ENCODE measurements at regions of chr15 and their contacts with region 1.

Region 1: GRCh38 chr15:84716036-84716799 is at the start of gene SEC11A:
- DNase-seq: peak; percentile 80 to 93 (median 88)
- ATAC-seq: peak; percentile 96 to 97 (median 96)
- H3K4me3 ChIP-seq: peak within 1 kb of the TSS; percentile 65 to 95
- H3K4me3 Mint-ChIP-seq: peak within 1 kb of the TSS; percentile 88 to 97 (median 89)
- H3K27ac ChIP-seq: peak within 1 kb of the TSS; percentile 78
- H3K27ac Mint-ChIP-seq: peak within 1 kb of the TSS; percentile 97 to 98
- H3K4me1 ChIP-seq: peaks cover 25% of the 10 kb centered on the region in 2 experiments
- H3K4me1 Mint-ChIP-seq: peaks cover 47 to 63% (median 49%) of the 10 kb centered on the region in 3 donors
- H3K27me3 ChIP-seq: no peaks in the 10 kb centered on the region
- H3K27me3 Mint-ChIP-seq: no peaks in the 10 kb centered on the region
- total RNA-seq, gene SEC11A: 52.3 to 68.9 (median 66.5) TPM

Region 2: DNA sequence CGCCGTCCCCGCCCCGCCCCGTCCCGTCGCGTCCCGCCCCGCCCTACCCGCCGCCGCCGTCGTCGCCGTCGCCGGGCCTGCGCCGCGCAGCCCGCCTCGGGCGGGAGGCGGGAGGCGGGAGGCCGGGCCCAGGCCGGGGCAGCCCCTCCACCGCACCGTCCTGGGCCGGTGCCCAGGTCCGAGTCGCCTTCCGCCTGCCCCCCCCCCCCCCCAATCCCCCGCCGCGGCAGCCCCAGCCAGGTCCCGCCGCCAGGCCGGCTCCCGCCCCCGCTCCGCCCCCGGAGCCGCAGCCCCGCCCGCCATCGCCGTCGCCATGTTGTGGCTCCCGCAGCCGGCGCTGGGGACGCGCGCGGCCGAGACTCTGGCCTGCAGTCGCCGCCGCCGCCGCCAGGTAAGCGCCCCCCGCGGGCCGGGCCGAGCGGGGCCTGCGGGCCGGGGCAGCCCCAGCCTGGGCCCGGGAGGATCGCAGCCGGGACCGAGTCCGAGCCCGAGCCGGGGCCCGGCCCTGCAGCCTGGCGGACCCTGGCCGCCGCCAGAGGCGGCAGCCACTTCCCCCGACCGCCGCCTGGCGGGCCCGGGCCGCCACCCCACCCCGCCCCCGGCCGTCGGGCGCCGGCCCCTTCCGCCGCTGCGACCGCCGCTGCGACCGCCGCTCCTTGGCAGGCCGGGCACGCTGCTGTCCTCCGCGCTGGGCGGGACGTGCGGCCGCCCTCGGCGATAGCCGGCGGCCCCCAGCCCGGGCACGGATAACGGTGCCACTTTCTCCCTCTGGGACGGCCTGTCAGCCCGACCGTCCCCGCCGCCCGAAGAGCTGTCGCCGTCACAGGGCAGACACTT is 32.3 kb after region 1 on chr15 and contains the start of gene ZNF592:
- CTCF ChIA-PET with region 1: interaction called, 4 to 13 read pairs
- POLR2A ChIA-PET with region 1: interaction called in 1 of 2 experiments, 7 read pairs
- DNase-seq: peak; percentile 57 to 89 (median 76)
- ATAC-seq: peak; percentile 76 to 80 (median 78)
- H3K4me3 ChIP-seq: peak within 1 kb of the TSS; percentile 87 to 94
- H3K4me3 Mint-ChIP-seq: peak within 1 kb of the TSS; percentile 95 to 98 (median 97)
- H3K27ac ChIP-seq: peak within 1 kb of the TSS; percentile 94
- H3K27ac Mint-ChIP-seq: peak within 1 kb of the TSS; percentile 95 to 99
- H3K4me1 ChIP-seq: peaks cover 26 to 51% of the 10 kb centered on the region in 2 experiments
- H3K4me1 Mint-ChIP-seq: peaks cover 70 to 72% (median 70%) of the 10 kb centered on the region in 3 donors
- H3K27me3 ChIP-seq: no peaks in the 10 kb centered on the region
- H3K27me3 Mint-ChIP-seq: no peaks in the 10 kb centered on the region
- total RNA-seq, gene ZNF592: 34.5 to 43.6 (median 39.0) TPM

Region 3: GRCh38 chr15:84783496-84784251 is 67.5 kb after region 1 on chr15:
- CTCF ChIA-PET with region 1: no interaction called
- POLR2A ChIA-PET with region 1: no interaction called
- DNase-seq: no peak
- ATAC-seq: no peak
- H3K4me3 ChIP-seq: no peak overlapping the region
- H3K4me3 Mint-ChIP-seq: no peak overlapping the region
- H3K27ac ChIP-seq: no peak overlapping the region
- H3K27ac Mint-ChIP-seq: no peak overlapping the region
- H3K4me1 ChIP-seq: peaks cover 0 to 17% of the 10 kb centered on the region in 2 experiments
- H3K4me1 Mint-ChIP-seq: peaks cover 44 to 48% (median 45%) of the 10 kb centered on the region in 3 donors
- H3K27me3 ChIP-seq: no peaks in the 10 kb centered on the region
- H3K27me3 Mint-ChIP-seq: no peaks in the 10 kb centered on the region

Measured in T-cell (primary cell).